A673 (cell line): ENCODE measurements at regions of chr6 and their contacts with region 1.

Region 1: GRCh38 chr6:63391203-63391970 is 71.6 kb upstream of the LGSN start:
- DNase-seq: no peak
- H3K4me3 ChIP-seq: no peak overlapping the region
- H3K27ac ChIP-seq: no peak overlapping the region
- H3K4me1 ChIP-seq: no peaks in the 10 kb centered on the region
- H3K27me3 ChIP-seq: no peaks in the 10 kb centered on the region
- CTCF ChIP-seq: no peak

Region 2: GRCh38 chr6:63368347-63368746 is 23.0 kb before region 1 on chr6:
- CTCF ChIA-PET with region 1: no interaction called
- POLR2A ChIA-PET with region 1: no interaction called
- intact Hi-C with region 1: no loop called
- DNase-seq: no peak
- H3K4me3 ChIP-seq: no peak overlapping the region
- H3K27ac ChIP-seq: no peak overlapping the region
- H3K4me1 ChIP-seq: no peaks in the 10 kb centered on the region
- H3K27me3 ChIP-seq: no peaks in the 10 kb centered on the region
- CTCF ChIP-seq: no peak

Region 3: DNA sequence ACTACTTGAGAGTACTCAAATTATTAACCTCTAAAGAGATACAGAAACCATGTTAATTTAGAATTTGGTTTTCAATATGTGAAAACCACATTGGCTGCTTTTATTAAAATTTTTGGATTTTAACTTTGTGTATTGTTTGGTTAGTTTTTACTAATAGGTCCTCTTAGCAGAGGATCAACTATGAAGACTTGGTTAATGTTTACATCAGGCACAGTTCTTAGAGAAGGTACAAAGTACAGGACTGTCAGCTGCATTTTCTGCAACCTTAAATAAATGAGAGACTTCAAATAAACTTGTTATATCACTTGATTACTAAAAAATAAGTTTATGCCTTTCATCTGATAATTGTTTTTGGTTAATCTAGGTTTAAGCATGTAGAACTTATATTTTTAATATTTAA is 333.3 kb after region 1 on chr6:
- CTCF ChIA-PET with region 1: no interaction called
- POLR2A ChIA-PET with region 1: interaction called, 11 read pairs
- intact Hi-C with region 1: no loop called
- DNase-seq: no peak
- H3K4me3 ChIP-seq: no peak overlapping the region
- H3K27ac ChIP-seq: no peak overlapping the region
- H3K4me1 ChIP-seq: no peaks in the 10 kb centered on the region
- H3K27me3 ChIP-seq: no peaks in the 10 kb centered on the region
- CTCF ChIP-seq: no peak